B cell (primary cell): ENCODE measurements at regions of chr21 and their contacts with region 1.

Region 1: DNA sequence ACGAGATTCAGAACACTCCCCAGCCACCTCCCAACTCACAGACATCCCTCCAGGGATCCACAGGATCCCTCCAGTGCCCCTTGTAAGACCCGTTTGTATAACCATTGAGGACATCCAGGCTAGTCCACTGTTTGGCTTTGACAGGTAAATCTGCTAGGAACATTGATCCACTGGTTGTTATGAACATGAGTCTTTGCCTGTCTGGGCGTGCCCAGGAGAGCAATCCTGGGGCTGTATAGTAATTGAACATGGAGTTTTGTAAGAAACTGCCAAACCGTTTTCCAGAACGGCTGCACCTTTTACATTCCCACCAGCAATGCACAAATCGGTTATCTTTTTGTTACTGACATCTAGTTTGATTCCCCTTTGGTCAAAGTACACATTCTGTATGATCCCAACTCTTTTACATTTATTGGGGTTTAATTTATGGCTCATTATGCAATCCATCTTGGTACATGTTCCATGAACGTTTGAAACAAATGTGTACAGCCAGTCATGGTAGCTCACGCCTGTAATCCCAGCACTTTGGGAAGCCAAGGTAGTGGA is 88.7 kb downstream of the WDR4 start:
- DNase-seq: no peak
- ATAC-seq: no peak
- H3K4me3 ChIP-seq: no peak overlapping the region
- H3K4me3 Mint-ChIP-seq: no peak overlapping the region
- H3K27ac ChIP-seq: no peak overlapping the region
- H3K27ac Mint-ChIP-seq: peak overlapping the region; percentile 27
- H3K4me1 ChIP-seq: peaks cover under 1 to 1% of the 10 kb centered on the region in 2 donors
- H3K4me1 Mint-ChIP-seq: peaks cover 2% of the 10 kb centered on the region
- H3K27me3 ChIP-seq: no peaks in the 10 kb centered on the region
- H3K27me3 Mint-ChIP-seq: peaks cover 9% of the 10 kb centered on the region
- CTCF ChIP-seq: no peak

Region 2: DNA sequence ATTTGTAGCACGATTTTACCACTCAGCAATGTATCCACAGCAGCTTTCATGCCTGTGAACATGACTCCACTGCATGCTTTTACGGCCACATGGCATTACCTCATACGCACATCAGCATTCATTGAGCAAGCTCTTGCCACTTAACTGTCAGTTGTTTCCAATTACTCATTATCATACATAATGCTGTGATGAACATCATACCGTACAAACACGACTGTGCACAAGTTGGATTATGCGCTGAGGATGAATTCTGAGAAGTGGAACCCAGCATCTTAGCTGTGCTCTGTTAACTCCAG is 709.9 kb before region 1 on chr21:
- CTCF ChIA-PET with region 1: no interaction called
- POLR2A ChIA-PET with region 1: no interaction called
- intact Hi-C with region 1: no loop called
- DNase-seq: no peak
- ATAC-seq: no peak
- H3K4me3 ChIP-seq: no peak overlapping the region
- H3K4me3 Mint-ChIP-seq: no peak overlapping the region
- H3K27ac ChIP-seq: no peak overlapping the region
- H3K27ac Mint-ChIP-seq: no peak overlapping the region
- H3K4me1 ChIP-seq: peaks cover 15 to 26% of the 10 kb centered on the region in 2 donors
- H3K4me1 Mint-ChIP-seq: peaks cover 21% of the 10 kb centered on the region
- H3K27me3 ChIP-seq: no peaks in the 10 kb centered on the region
- H3K27me3 Mint-ChIP-seq: no peaks in the 10 kb centered on the region
- CTCF ChIP-seq: no peak

Region 3: GRCh38 chr21:42768324-42769121 is 22.1 kb before region 1 on chr21:
- CTCF ChIA-PET with region 1: no interaction called
- POLR2A ChIA-PET with region 1: interaction called, 18 read pairs
- intact Hi-C with region 1: no loop called
- DNase-seq: no peak
- ATAC-seq: no peak
- H3K4me3 ChIP-seq: no peak overlapping the region
- H3K4me3 Mint-ChIP-seq: no peak overlapping the region
- H3K27ac ChIP-seq: no peak overlapping the region
- H3K27ac Mint-ChIP-seq: peak overlapping the region; percentile 15
- H3K4me1 ChIP-seq: no peaks in the 10 kb centered on the region
- H3K4me1 Mint-ChIP-seq: no peaks in the 10 kb centered on the region
- H3K27me3 ChIP-seq: no peaks in the 10 kb centered on the region
- H3K27me3 Mint-ChIP-seq: no peaks in the 10 kb centered on the region
- CTCF ChIP-seq: no peak

Region 4: GRCh38 chr21:42997053-42997452 is 206.5 kb after region 1 on chr21:
- CTCF ChIA-PET with region 1: no interaction called
- POLR2A ChIA-PET with region 1: no interaction called
- intact Hi-C with region 1: no loop called
- DNase-seq: no peak
- ATAC-seq: no peak
- H3K4me3 ChIP-seq: no peak overlapping the region
- H3K4me3 Mint-ChIP-seq: no peak overlapping the region
- H3K27ac ChIP-seq: no peak overlapping the region
- H3K27ac Mint-ChIP-seq: no peak overlapping the region
- H3K4me1 ChIP-seq: peaks cover 2 to 4% of the 10 kb centered on the region in 2 donors
- H3K4me1 Mint-ChIP-seq: peaks cover 5% of the 10 kb centered on the region
- H3K27me3 ChIP-seq: no peaks in the 10 kb centered on the region
- H3K27me3 Mint-ChIP-seq: no peaks in the 10 kb centered on the region
- CTCF ChIP-seq: no peak